ENCODE measurements at regions of chr7 and their contacts with region 1.

Region 1: GRCh38 chr7:48424731-48425130 is 253.5 kb downstream of the ABCA13 start:
- DNase-seq: peak; percentile 75
- ATAC-seq: no peak
- H3K4me3 ChIP-seq: no peak overlapping the region
- H3K27ac ChIP-seq: no peak overlapping the region
- H3K4me1 ChIP-seq: peaks cover 58% of the 10 kb centered on the region
- H3K27me3 ChIP-seq: no peaks in the 10 kb centered on the region
- CTCF ChIP-seq: peak; percentile 92

Region 2: GRCh38 chr7:48168159-48168558 is 256.6 kb before region 1 on chr7:
- CTCF ChIA-PET with region 1: no interaction called
- POLR2A ChIA-PET with region 1: no interaction called
- intact Hi-C with region 1: loop called (anchors 5 kb)
- DNase-seq: peak; percentile 67
- ATAC-seq: peak; percentile 94
- H3K4me3 ChIP-seq: no peak overlapping the region
- H3K27ac ChIP-seq: no peak overlapping the region
- H3K4me1 ChIP-seq: peaks cover 4% of the 10 kb centered on the region
- H3K27me3 ChIP-seq: no peaks in the 10 kb centered on the region
- CTCF ChIP-seq: peak; percentile 44

Region 3: GRCh38 chr7:48389977-48390376 is 34.8 kb before region 1 on chr7:
- CTCF ChIA-PET with region 1: no interaction called
- POLR2A ChIA-PET with region 1: no interaction called
- intact Hi-C with region 1: loop called (anchors 1 kb)
- DNase-seq: peak; percentile 91
- ATAC-seq: peak; percentile 93
- H3K4me3 ChIP-seq: peak overlapping the region; percentile 29; the same call in 1 of the 2 replicates
- H3K27ac ChIP-seq: peak overlapping the region; percentile 95
- H3K4me1 ChIP-seq: peaks cover 24% of the 10 kb centered on the region
- H3K27me3 ChIP-seq: no peaks in the 10 kb centered on the region
- CTCF ChIP-seq: no peak

Region 4: GRCh38 chr7:48637382-48637781 is 212.7 kb after region 1 on chr7:
- CTCF ChIA-PET with region 1: no interaction called
- POLR2A ChIA-PET with region 1: no interaction called
- intact Hi-C with region 1: loop called (anchors 1 kb)
- DNase-seq: peak; percentile 86
- ATAC-seq: peak; percentile 91
- H3K4me3 ChIP-seq: no peak overlapping the region
- H3K27ac ChIP-seq: peak overlapping the region; percentile 56
- H3K4me1 ChIP-seq: peaks cover 21% of the 10 kb centered on the region
- H3K27me3 ChIP-seq: no peaks in the 10 kb centered on the region
- CTCF ChIP-seq: no peak

Region 5: DNA sequence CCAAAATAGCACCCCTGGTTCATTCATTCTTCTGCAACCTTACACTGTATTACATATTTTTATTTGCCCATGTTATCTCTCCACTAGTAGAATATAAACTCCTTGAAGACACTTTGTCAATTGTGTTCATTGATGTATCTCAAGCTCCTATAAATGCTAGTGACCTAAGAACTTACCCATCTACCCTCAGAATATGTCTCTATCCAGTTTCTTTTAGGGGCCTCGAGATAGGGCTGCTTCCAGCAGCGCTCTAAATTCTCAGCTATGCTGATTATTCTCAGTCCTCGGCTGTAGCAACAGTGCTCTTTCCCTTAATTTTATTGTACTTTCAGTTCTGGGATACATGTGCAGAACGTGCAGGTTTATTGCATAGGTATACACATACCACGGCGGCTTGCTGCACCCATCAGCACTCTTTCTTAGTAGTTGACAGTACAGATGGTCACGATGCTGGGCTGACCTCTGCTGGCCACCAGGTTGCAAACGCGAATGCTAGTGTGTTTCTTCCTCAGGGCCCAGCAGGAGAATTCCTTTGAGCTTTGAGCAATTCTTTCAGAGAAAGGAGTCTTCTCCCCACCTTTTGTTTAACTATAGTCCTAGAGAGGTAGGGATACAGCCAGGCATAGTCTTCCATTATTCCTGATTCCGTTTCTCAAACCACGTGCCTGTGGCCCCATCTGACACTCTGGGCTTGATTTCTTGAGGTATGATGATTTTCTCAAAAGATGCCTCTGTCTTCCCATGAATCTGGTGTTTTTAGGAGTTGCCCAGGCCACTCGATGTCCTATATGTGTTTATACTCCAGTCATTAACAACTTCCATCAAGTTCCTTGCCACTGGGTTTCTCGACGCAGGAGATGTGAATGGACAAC is 450.6 kb after region 1 on chr7:
- CTCF ChIA-PET with region 1: interaction called, 3 read pairs
- POLR2A ChIA-PET with region 1: no interaction called
- intact Hi-C with region 1: loop called (anchors 1 kb)
- DNase-seq: peak; percentile 72
- ATAC-seq: peak; percentile 100
- H3K4me3 ChIP-seq: peak overlapping the region; percentile 34; the same call in 1 of the 2 replicates
- H3K27ac ChIP-seq: no peak overlapping the region
- H3K4me1 ChIP-seq: no peaks in the 10 kb centered on the region
- H3K27me3 ChIP-seq: no peaks in the 10 kb centered on the region
- CTCF ChIP-seq: peak; percentile 80

Measured in PC-3 (cell line).